Natural killer cell (primary cell): ENCODE measurements at regions of chrX and their contacts with region 1.

Region 1: GRCh38 chrX:46686003-46686645 is 72.8 kb downstream of the SLC9A7 start:
- DNase-seq: peak in 1 of 2 donors; percentile 71
- ATAC-seq: peak; percentile 50 to 79 (median 70)
- H3K4me3 ChIP-seq: no peak overlapping the region
- H3K4me3 Mint-ChIP-seq: no peak overlapping the region
- H3K27ac ChIP-seq: no peak overlapping the region
- H3K27ac Mint-ChIP-seq: no peak overlapping the region
- H3K4me1 ChIP-seq: no peaks in the 10 kb centered on the region
- H3K4me1 Mint-ChIP-seq: no peaks in the 10 kb centered on the region
- H3K27me3 ChIP-seq: no peaks in the 10 kb centered on the region
- H3K27me3 Mint-ChIP-seq: peaks cover 0 to 23% of the 10 kb centered on the region in 2 donors
- CTCF ChIP-seq: peak; percentile 51

Region 2: GRCh38 chrX:46381630-46382029 is 304.5 kb before region 1 on chrX:
- intact Hi-C with region 1: loop called (anchors 1 kb)
- DNase-seq: peak in 1 of 2 donors; percentile 41
- ATAC-seq: peak in 2 of 3 donors; percentile 40 to 48
- H3K4me3 ChIP-seq: no peak overlapping the region
- H3K4me3 Mint-ChIP-seq: no peak overlapping the region
- H3K27ac ChIP-seq: no peak overlapping the region
- H3K27ac Mint-ChIP-seq: no peak overlapping the region
- H3K4me1 ChIP-seq: no peaks in the 10 kb centered on the region
- H3K4me1 Mint-ChIP-seq: no peaks in the 10 kb centered on the region
- H3K27me3 ChIP-seq: no peaks in the 10 kb centered on the region
- H3K27me3 Mint-ChIP-seq: peaks cover 0 to 29% of the 10 kb centered on the region in 2 donors
- CTCF ChIP-seq: no peak

Region 3: GRCh38 chrX:46573331-46573891 is 112.7 kb before region 1 on chrX and contains the start of gene CHST7:
- intact Hi-C with region 1: no loop called
- DNase-seq: peak; percentile 49 to 74
- ATAC-seq: peak; percentile 63 to 76 (median 72)
- H3K4me3 ChIP-seq: peak within 1 kb of the TSS; percentile 66
- H3K4me3 Mint-ChIP-seq: peak within 1 kb of the TSS; percentile 86
- H3K27ac ChIP-seq: peak within 1 kb of the TSS; percentile 70
- H3K27ac Mint-ChIP-seq: peak within 1 kb of the TSS; percentile 35 to 95
- H3K4me1 ChIP-seq: peaks cover 31% of the 10 kb centered on the region
- H3K4me1 Mint-ChIP-seq: peaks cover 20 to 32% of the 10 kb centered on the region in 2 donors
- H3K27me3 ChIP-seq: no peaks in the 10 kb centered on the region
- H3K27me3 Mint-ChIP-seq: no peaks in the 10 kb centered on the region
- CTCF ChIP-seq: no peak
- total RNA-seq, gene CHST7: 8.7 to 15.9 (median 11.8) TPM